ENCODE measurements at regions of chr2 and their contacts with region 1.

Region 1: DNA sequence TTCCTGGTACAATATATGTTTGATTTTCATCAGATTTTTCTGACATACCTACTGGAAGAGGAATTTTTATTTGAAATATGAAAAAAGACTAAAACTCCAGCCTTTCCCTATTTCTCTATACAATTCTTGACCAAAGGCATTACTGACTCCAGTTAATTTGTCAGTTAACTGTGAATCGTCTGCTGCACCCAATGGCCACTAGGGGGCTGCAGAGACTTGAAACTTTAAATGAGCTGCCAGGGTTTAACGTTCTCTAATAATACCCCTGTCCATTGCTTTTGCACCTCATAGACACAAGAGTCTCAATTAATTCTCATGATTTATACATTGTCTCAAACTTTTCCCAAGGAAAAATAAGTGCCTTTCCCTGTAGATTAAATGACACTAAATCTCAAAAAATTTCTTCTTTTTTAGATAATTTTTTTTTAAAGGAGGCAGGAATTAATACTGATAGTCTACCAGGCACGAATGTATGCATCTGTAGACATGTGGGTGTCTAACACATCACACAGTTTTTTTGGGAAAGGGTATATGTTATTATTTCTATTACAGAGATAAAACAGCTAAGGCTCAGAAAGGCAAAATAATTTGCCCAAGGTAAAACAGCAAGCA is 1.8 kb upstream of the ALK start:
- DNase-seq: peak; percentile 83
- H3K4me3 Mint-ChIP-seq: no peak overlapping the region
- H3K27ac Mint-ChIP-seq: no peak overlapping the region
- H3K4me1 Mint-ChIP-seq: no peaks in the 10 kb centered on the region
- H3K27me3 Mint-ChIP-seq: peaks cover 42% of the 10 kb centered on the region
- CTCF ChIP-seq: peak; percentile 86

Region 2: DNA sequence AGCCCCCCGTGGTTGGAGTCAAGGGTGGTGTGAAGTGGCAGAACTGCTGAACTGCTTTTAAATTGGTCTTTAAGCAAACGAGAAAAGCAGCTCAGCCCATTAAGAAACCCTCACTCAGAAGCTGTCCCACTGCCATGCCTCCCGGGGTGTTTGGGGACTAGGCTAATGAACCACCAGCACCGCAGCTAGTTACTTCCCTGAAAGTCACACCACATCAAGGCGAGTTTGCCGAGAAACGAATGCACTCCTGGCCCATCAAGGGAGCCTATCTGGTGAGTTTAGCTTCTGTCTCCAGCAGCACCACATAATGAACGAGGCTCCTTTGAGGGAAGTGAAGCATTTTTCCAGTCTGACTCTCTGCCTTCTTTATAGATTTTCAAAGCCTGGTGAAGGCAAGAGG is 12.8 kb after region 1 on chr2:
- CTCF ChIA-PET with region 1: interaction called, 11 read pairs
- POLR2A ChIA-PET with region 1: no interaction called
- intact Hi-C with region 1: no loop called
- DNase-seq: no peak
- H3K4me3 Mint-ChIP-seq: no peak overlapping the region
- H3K27ac Mint-ChIP-seq: no peak overlapping the region
- H3K4me1 Mint-ChIP-seq: no peaks in the 10 kb centered on the region
- H3K27me3 Mint-ChIP-seq: peaks cover 56% of the 10 kb centered on the region
- CTCF ChIP-seq: no peak

Region 3: DNA sequence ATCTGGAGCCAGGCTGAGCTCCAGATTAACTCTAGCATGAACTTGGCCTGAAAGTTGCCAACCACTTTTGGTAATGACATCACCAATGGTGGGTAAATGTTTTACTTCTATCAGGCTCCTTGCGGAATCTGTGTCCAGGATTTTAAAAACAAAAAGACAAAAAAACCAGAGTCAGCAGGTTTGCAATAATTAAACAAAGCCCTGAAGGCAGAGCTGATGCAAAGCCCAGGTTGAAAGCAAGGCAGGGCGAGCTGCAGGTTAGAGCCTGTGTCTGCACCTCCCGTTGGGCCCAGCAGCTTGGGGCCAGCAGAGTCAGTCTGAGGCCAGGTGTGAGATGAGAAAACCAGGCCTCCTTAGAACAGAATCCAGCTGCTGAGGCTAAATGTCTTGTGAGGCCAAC is 27.3 kb after region 1 on chr2:
- CTCF ChIA-PET with region 1: interaction called, 13 read pairs
- POLR2A ChIA-PET with region 1: interaction called, 4 read pairs
- intact Hi-C with region 1: no loop called
- DNase-seq: no peak
- H3K4me3 Mint-ChIP-seq: no peak overlapping the region
- H3K27ac Mint-ChIP-seq: no peak overlapping the region
- H3K4me1 Mint-ChIP-seq: no peaks in the 10 kb centered on the region
- H3K27me3 Mint-ChIP-seq: peaks cover 88% of the 10 kb centered on the region
- CTCF ChIP-seq: no peak

Region 4: DNA sequence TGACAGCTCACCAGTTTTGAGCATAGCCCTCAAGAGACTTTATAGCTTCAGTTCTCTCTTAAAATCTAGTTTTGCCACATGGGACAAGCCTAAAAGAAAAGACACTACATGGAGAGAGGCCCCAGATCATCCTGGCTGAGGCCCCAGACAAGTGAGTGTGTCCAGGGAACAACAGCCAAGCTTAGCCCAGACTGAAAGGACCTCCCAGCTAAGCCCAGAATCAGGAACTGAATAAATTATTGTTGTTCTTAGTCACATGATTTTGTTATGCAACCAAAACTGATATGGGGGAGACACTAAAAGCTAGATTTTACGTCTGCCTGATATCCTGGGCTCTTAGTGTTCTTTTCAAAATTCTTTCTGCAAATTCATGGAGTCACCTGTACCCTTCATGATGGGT is 278.8 kb after region 1 on chr2:
- CTCF ChIA-PET with region 1: no interaction called
- POLR2A ChIA-PET with region 1: no interaction called
- intact Hi-C with region 1: no loop called
- DNase-seq: no peak
- H3K4me3 Mint-ChIP-seq: no peak overlapping the region
- H3K27ac Mint-ChIP-seq: no peak overlapping the region
- H3K4me1 Mint-ChIP-seq: peaks cover 11% of the 10 kb centered on the region
- H3K27me3 Mint-ChIP-seq: no peaks in the 10 kb centered on the region
- CTCF ChIP-seq: no peak

Measured in MCF 10A (cell line).